WTC11 (cell line): ENCODE measurements at regions of chr10 and their contacts with region 1.

Region 1: GRCh38 chr10:80506189-80506575 is 31.5 kb upstream of the SH2D4B start:
- DNase-seq: no peak
- ATAC-seq: no peak
- H3K4me3 Mint-ChIP-seq: no peak overlapping the region
- H3K27ac Mint-ChIP-seq: peak overlapping the region; percentile 36; the same call in 1 of the 2 replicates
- H3K4me1 Mint-ChIP-seq: peaks cover 37% of the 10 kb centered on the region
- H3K27me3 Mint-ChIP-seq: no peaks in the 10 kb centered on the region
- CTCF ChIP-seq: no peak

Region 2: GRCh38 chr10:80081931-80082750 is 424.0 kb before region 1 on chr10:
- CTCF ChIA-PET with region 1: no interaction called
- POLR2A ChIA-PET with region 1: no interaction called
- DNase-seq: no peak
- ATAC-seq: no peak
- H3K4me3 Mint-ChIP-seq: no peak overlapping the region
- H3K27ac Mint-ChIP-seq: no peak overlapping the region
- H3K4me1 Mint-ChIP-seq: peaks cover 13% of the 10 kb centered on the region
- H3K27me3 Mint-ChIP-seq: no peaks in the 10 kb centered on the region
- CTCF ChIP-seq: no peak

Region 3: GRCh38 chr10:80260295-80261243 is 245.6 kb before region 1 on chr10:
- CTCF ChIA-PET with region 1: interaction called, 12 read pairs
- POLR2A ChIA-PET with region 1: no interaction called
- DNase-seq: peak; percentile 70
- ATAC-seq: peak; percentile 26
- H3K4me3 Mint-ChIP-seq: no peak overlapping the region
- H3K27ac Mint-ChIP-seq: no peak overlapping the region
- H3K4me1 Mint-ChIP-seq: peaks cover 17% of the 10 kb centered on the region
- H3K27me3 Mint-ChIP-seq: peaks cover 15% of the 10 kb centered on the region
- CTCF ChIP-seq: peak; percentile 79

Region 4: DNA sequence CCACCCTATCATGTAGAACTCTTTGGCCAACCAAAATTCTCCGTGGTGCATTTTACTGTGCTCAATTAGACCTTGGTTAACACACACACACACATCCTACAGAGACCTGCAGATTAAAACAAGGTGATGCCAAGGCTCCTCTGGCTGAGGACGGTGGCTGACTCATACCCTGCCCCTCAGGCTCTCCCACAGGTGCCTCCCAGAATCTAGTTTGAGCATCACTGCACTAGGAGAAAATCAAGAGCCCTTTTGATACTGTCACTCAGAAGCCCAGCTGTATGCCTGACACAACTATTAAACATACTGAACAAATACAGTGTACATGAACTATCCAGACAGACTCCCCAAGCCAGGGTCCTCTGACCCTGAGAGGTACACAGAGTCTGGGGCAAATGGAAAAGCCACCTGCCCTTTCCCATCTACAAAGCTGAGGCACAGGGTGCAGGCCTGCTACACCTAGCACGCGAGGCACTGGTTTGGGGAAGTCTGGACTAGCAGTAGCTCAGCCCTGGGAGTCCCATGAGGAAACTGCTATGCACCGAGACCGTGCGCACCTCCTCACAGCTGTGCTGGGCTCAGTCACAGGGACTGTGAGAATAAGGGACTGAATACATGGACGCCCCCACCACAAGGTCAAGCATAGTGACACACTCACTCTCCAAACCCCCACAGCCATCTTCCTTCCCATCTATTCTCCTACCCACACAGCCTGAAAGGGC is 225.1 kb before region 1 on chr10:
- CTCF ChIA-PET with region 1: no interaction called
- POLR2A ChIA-PET with region 1: no interaction called
- DNase-seq: no peak
- ATAC-seq: no peak
- H3K4me3 Mint-ChIP-seq: no peak overlapping the region
- H3K27ac Mint-ChIP-seq: no peak overlapping the region; the same call in 1 of the 2 replicates
- H3K4me1 Mint-ChIP-seq: peaks cover 14% of the 10 kb centered on the region
- H3K27me3 Mint-ChIP-seq: no peaks in the 10 kb centered on the region; the same call in 1 of the 2 replicates
- CTCF ChIP-seq: no peak

Region 5: DNA sequence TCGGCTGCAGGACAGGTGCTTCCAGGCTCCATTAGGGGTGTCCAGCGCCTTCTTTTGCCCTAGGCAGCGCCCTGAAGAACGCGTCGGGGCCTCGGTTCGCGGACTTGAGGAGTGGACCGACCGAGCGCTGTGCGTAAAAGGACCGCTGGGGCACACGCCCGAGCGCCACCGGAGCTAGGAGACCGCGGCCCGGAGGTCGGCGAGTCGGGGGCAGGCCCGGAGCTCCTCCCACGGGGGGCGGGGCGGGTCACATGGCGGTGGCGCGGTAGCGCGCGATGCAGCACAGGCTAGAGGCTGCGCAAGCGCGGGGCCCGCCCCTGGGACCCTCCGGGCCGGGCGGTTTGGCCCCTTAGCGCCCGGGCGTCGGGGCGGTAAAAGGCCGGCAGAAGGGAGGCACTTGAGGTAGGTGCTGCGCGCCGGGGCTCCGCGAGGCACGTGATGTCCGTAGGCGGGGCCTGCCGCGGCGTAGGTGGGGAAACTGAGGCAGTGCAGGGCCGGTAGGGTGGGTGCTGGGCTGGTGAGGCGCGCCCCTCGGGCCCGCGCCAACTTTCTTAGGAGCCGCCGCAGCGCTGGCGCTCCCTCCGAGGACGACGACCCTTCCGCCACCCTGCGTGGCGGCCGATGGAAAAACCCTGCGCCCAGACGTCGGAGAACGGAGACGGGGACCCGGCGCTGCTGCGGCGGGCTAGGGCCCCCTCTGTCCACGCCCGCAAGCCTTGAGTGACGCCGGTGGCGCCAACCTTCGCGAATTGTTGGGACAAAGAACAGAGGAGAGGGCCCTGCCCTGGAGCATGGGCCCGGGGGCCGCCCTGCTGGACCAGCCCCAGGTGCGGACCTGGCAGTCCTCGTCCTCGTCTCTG is 97.7 kb before region 1 on chr10 and contains the start of gene PRXL2A:
- CTCF ChIA-PET with region 1: interaction called, 19 read pairs
- POLR2A ChIA-PET with region 1: interaction called, 3 read pairs
- DNase-seq: peak; percentile 94
- ATAC-seq: peak; percentile 95
- H3K4me3 Mint-ChIP-seq: peak within 1 kb of the TSS; percentile 88
- H3K27ac Mint-ChIP-seq: peak within 1 kb of the TSS; percentile 60
- H3K4me1 Mint-ChIP-seq: peaks cover 44% of the 10 kb centered on the region
- H3K27me3 Mint-ChIP-seq: peaks cover 26% of the 10 kb centered on the region
- CTCF ChIP-seq: no peak
- total RNA-seq, gene PRXL2A: 46.6 to 56.5 TPM (median 52.4 TPM) in 3 replicates

Region 6: GRCh38 chr10:80472234-80473095 is 33.7 kb before region 1 on chr10:
- CTCF ChIA-PET with region 1: interaction called, 802 read pairs
- POLR2A ChIA-PET with region 1: no interaction called
- DNase-seq: no peak
- ATAC-seq: no peak
- H3K4me3 Mint-ChIP-seq: no peak overlapping the region
- H3K27ac Mint-ChIP-seq: no peak overlapping the region
- H3K4me1 Mint-ChIP-seq: peaks cover 62% of the 10 kb centered on the region
- H3K27me3 Mint-ChIP-seq: peaks cover 21% of the 10 kb centered on the region
- CTCF ChIP-seq: no peak

Region 7: GRCh38 chr10:80487791-80488538 is 18.2 kb before region 1 on chr10:
- CTCF ChIA-PET with region 1: interaction called, 66 read pairs
- POLR2A ChIA-PET with region 1: no interaction called
- DNase-seq: no peak
- ATAC-seq: no peak
- H3K4me3 Mint-ChIP-seq: no peak overlapping the region
- H3K27ac Mint-ChIP-seq: no peak overlapping the region
- H3K4me1 Mint-ChIP-seq: peaks cover 50% of the 10 kb centered on the region
- H3K27me3 Mint-ChIP-seq: no peaks in the 10 kb centered on the region
- CTCF ChIP-seq: no peak

Region 8: GRCh38 chr10:80535671-80536365 is 29.6 kb after region 1 on chr10:
- CTCF ChIA-PET with region 1: interaction called, 10 read pairs
- POLR2A ChIA-PET with region 1: no interaction called
- DNase-seq: peak; percentile 49
- ATAC-seq: peak; percentile 87
- H3K4me3 Mint-ChIP-seq: no peak overlapping the region
- H3K27ac Mint-ChIP-seq: no peak overlapping the region
- H3K4me1 Mint-ChIP-seq: peaks cover 9% of the 10 kb centered on the region
- H3K27me3 Mint-ChIP-seq: peaks cover 3% of the 10 kb centered on the region; the same call in 1 of the 2 replicates
- CTCF ChIP-seq: no peak